Activated naive CD4-positive, alpha-beta T cell treated with anti-CD3 and anti-CD28 coated beads for 36 hours (primary cell): ENCODE measurements at regions of chr1 and their contacts with region 1.

Region 1: GRCh38 chr1:235888119-235888643 is 21.5 kb upstream of the LYST start:
- DNase-seq: peak; percentile 61
- H3K4me3 Mint-ChIP-seq: peak overlapping the region; percentile 16
- H3K27ac Mint-ChIP-seq: peak overlapping the region; percentile 82
- H3K4me1 Mint-ChIP-seq: peaks cover 41% of the 10 kb centered on the region
- H3K27me3 Mint-ChIP-seq: no peaks in the 10 kb centered on the region

Region 2: DNA sequence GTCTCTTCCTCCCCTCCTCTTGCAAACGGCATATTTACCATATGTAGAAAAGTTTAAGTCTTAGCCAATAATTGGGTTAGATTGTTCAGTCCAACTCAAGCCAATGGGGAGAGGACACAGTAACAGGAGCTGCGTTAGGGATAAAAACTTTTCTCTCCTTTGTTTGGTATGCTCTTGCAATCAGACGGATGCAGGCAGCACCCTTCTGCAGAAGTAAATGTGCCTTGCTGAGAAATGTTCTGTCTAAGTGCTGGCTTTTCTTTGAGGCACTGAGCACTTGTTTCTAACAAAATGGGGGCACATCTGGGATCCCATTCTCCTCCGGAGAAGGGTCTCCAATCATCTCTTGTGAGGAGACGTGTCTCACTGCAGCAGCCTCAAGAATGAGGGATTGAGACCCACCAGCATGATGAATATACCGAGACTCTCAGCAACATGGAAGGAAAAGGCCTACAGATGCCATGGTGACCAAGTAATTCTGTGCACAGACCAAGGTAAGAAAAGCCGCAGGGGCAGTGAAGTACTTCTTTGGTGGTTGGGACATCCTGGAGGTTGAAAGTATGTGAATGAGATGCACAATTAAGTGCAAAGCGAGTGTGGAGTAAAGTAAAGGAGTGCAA is 217.9 kb before region 1 on chr1:
- CTCF ChIA-PET with region 1: no interaction called
- intact Hi-C with region 1: no loop called
- DNase-seq: no peak
- H3K4me3 Mint-ChIP-seq: no peak overlapping the region
- H3K27ac Mint-ChIP-seq: peak overlapping the region; percentile 50
- H3K4me1 Mint-ChIP-seq: no peaks in the 10 kb centered on the region
- H3K27me3 Mint-ChIP-seq: no peaks in the 10 kb centered on the region

Region 3: GRCh38 chr1:235855811-235856429 is 32.3 kb before region 1 on chr1:
- CTCF ChIA-PET with region 1: no interaction called
- intact Hi-C with region 1: loop called (anchors 1 kb)
- DNase-seq: no peak
- H3K4me3 Mint-ChIP-seq: no peak overlapping the region
- H3K27ac Mint-ChIP-seq: no peak overlapping the region
- H3K4me1 Mint-ChIP-seq: peaks cover 54% of the 10 kb centered on the region
- H3K27me3 Mint-ChIP-seq: no peaks in the 10 kb centered on the region

Region 4: GRCh38 chr1:235910357-235911299 is 22.4 kb after region 1 on chr1:
- CTCF ChIA-PET with region 1: no interaction called
- intact Hi-C with region 1: loop called (anchors 1 kb)
- DNase-seq: peak; percentile 73
- H3K4me3 Mint-ChIP-seq: no peak overlapping the region
- H3K27ac Mint-ChIP-seq: no peak overlapping the region
- H3K4me1 Mint-ChIP-seq: peaks cover 26% of the 10 kb centered on the region
- H3K27me3 Mint-ChIP-seq: no peaks in the 10 kb centered on the region